Activated CD4-positive, alpha-beta memory T cell treated with anti-CD3 and anti-CD28 coated beads, Interleukin-2, amount 10 ng/mL, durations not matched to agents 7 days and 5 days (primary cell): ENCODE measurements at regions of chr10 and their contacts with region 1.

Region 1: GRCh38 chr10:45249978-45250693 is 65.3 kb downstream of the OR13A1 start:
- DNase-seq: no peak
- H3K4me3 Mint-ChIP-seq: peak overlapping the region; percentile 42
- H3K27ac Mint-ChIP-seq: no peak overlapping the region
- H3K4me1 Mint-ChIP-seq: peaks cover 15% of the 10 kb centered on the region
- H3K27me3 Mint-ChIP-seq: peaks cover 20% of the 10 kb centered on the region

Region 2: GRCh38 chr10:45224219-45224841 is 25.8 kb before region 1 on chr10:
- CTCF ChIA-PET with region 1: no interaction called
- POLR2A ChIA-PET with region 1: no interaction called
- DNase-seq: no peak
- H3K4me3 Mint-ChIP-seq: no peak overlapping the region
- H3K27ac Mint-ChIP-seq: no peak overlapping the region
- H3K4me1 Mint-ChIP-seq: no peaks in the 10 kb centered on the region
- H3K27me3 Mint-ChIP-seq: peaks cover 23% of the 10 kb centered on the region

Region 3: DNA sequence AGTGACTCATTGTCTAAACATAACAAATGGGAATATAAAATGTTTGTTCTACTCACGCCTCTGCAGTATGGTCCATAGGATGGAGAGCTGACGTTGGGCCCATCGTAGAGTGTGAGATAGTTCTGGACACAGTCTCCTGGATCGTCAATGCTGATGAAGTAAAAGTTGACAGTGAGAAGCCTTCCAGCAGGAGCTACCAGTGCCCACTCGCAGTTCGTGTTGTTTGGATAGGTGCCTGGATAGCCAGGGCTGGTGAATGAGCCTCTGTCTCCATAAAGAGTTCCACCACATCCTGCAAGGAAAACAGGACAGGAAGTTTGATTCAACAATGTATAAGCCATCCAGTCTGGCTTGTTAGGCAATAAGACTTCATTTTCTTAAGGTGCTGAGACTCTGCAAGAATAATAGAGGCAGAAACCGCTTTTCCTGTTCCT is 14.3 kb before region 1 on chr10:
- CTCF ChIA-PET with region 1: interaction called, 20 read pairs
- POLR2A ChIA-PET with region 1: no interaction called
- DNase-seq: no peak
- H3K4me3 Mint-ChIP-seq: no peak overlapping the region
- H3K27ac Mint-ChIP-seq: no peak overlapping the region
- H3K4me1 Mint-ChIP-seq: peaks cover 16% of the 10 kb centered on the region
- H3K27me3 Mint-ChIP-seq: peaks cover 3% of the 10 kb centered on the region

Region 4: GRCh38 chr10:45420453-45421192 is 170.5 kb after region 1 on chr10:
- CTCF ChIA-PET with region 1: interaction called, 11 read pairs
- POLR2A ChIA-PET with region 1: no interaction called
- DNase-seq: peak; percentile 81
- H3K4me3 Mint-ChIP-seq: peak overlapping the region; percentile 98
- H3K27ac Mint-ChIP-seq: peak overlapping the region; percentile 100
- H3K4me1 Mint-ChIP-seq: peaks cover 89% of the 10 kb centered on the region
- H3K27me3 Mint-ChIP-seq: no peaks in the 10 kb centered on the region

Region 5: DNA sequence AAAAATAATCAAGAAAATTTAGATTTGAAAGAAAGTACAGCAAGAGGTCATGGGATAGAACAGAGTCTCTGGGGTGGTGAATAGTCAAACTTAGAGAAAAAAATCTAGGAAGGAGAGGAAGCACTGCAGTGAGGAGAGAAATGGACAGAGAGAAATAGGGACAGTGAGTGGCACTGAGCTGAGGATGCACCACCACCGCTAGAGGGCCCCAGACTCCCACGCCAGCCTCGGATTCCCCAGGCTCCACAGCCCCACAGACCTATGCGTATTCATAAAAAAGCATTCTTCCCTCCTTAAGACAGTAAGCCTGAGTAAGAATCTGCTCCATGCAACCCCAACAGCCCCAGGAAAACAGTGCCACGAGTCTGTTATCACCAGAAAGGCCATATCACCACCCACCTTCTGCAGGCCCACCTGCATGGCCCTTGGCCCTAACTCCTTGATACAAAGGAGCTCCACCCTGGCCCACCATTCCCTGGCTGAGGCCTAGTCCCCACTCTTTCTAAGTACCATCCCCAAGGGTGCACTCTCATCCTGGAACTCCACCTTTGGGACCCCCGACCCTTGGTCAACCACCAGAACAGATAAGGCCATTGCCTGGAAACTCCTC is 214.9 kb after region 1 on chr10:
- CTCF ChIA-PET with region 1: interaction called, 21 read pairs
- POLR2A ChIA-PET with region 1: no interaction called
- DNase-seq: peak; percentile 82
- H3K4me3 Mint-ChIP-seq: no peak overlapping the region
- H3K27ac Mint-ChIP-seq: no peak overlapping the region
- H3K4me1 Mint-ChIP-seq: peaks cover 54% of the 10 kb centered on the region
- H3K27me3 Mint-ChIP-seq: no peaks in the 10 kb centered on the region

Region 6: GRCh38 chr10:45672181-45673073 is 422.3 kb after region 1 on chr10 and contains the start of gene ZFAND4:
- CTCF ChIA-PET with region 1: interaction called, 11 read pairs
- POLR2A ChIA-PET with region 1: no interaction called
- DNase-seq: peak; percentile 96
- H3K4me3 Mint-ChIP-seq: peak within 1 kb of the TSS; percentile 92
- H3K27ac Mint-ChIP-seq: peak within 1 kb of the TSS; percentile 80
- H3K4me1 Mint-ChIP-seq: peaks cover 33% of the 10 kb centered on the region
- H3K27me3 Mint-ChIP-seq: no peaks in the 10 kb centered on the region
- total RNA-seq, gene ZFAND4: 19.6 to 19.7 TPM